ENCODE measurements at regions of chr17 and their contacts with region 1.

Region 1: DNA sequence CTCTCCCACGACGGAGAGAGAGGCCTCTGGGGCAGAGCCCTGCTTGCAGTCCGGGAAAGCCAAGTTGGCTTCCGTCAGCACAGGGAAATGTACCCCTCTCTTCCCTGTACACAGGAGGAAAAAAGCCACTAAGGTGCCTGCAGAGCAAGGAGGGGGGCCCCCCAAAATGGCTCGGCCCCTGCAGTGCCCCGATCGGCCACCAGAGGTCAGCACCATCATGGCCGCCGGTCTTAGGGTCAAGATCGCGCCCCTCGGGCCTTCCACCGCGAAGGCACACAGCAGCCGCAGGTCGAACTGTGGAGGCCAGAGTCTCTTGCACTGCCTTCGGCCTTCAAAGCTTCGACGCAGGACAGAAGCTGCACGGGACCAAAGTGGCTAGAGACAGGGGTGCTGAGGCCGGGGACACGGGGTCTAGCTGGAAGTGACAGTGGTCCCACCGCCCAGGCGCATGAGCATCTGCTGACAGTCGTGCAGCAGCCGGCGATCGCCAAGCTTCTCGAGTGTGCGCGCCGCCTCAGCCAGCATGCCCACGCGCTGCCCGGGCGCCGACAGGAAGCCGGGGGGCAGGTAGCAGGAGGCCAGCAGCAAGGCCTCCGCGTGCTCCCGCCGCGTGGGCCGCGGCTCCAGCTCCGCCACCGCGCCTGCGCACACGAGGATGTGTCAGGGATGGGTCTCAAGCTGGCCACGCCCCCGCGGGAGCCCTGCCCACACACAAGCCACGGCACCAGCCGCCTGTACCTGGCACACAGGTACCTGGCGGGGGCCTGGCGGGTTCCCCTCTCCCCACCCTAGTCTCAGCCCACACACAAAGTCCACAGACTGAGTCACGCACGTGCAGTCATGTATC is 24.4 kb downstream of the SREBF1 start:
- DNase-seq: peak; percentile 92
- H3K4me3 ChIP-seq: no peak overlapping the region
- H3K27ac ChIP-seq: peak overlapping the region in 7 of 8 donors; percentile 1 to 57 (median 26)
- H3K4me1 ChIP-seq: peaks cover 9 to 67% (median 20%) of the 10 kb centered on the region in 6 donors
- H3K27me3 ChIP-seq: no peaks in the 10 kb centered on the region
- CTCF ChIP-seq: peak; percentile 95 to 100 (median 99)
- POLR2A ChIP-seq: peak in 1 of 3 donors; percentile 20

Region 2: GRCh38 chr17:17859909-17860765 is 47.7 kb after region 1 on chr17:
- intact Hi-C with region 1: loop called (anchors 2 kb)
- DNase-seq: peak; percentile 92
- H3K4me3 ChIP-seq: no peak overlapping the region
- H3K27ac ChIP-seq: no peak overlapping the region
- H3K4me1 ChIP-seq: peaks cover 0 to 26% (median 7%) of the 10 kb centered on the region in 6 donors
- H3K27me3 ChIP-seq: no peaks in the 10 kb centered on the region
- CTCF ChIP-seq: peak; percentile 93 to 98 (median 97)
- POLR2A ChIP-seq: no peak

Region 3: DNA sequence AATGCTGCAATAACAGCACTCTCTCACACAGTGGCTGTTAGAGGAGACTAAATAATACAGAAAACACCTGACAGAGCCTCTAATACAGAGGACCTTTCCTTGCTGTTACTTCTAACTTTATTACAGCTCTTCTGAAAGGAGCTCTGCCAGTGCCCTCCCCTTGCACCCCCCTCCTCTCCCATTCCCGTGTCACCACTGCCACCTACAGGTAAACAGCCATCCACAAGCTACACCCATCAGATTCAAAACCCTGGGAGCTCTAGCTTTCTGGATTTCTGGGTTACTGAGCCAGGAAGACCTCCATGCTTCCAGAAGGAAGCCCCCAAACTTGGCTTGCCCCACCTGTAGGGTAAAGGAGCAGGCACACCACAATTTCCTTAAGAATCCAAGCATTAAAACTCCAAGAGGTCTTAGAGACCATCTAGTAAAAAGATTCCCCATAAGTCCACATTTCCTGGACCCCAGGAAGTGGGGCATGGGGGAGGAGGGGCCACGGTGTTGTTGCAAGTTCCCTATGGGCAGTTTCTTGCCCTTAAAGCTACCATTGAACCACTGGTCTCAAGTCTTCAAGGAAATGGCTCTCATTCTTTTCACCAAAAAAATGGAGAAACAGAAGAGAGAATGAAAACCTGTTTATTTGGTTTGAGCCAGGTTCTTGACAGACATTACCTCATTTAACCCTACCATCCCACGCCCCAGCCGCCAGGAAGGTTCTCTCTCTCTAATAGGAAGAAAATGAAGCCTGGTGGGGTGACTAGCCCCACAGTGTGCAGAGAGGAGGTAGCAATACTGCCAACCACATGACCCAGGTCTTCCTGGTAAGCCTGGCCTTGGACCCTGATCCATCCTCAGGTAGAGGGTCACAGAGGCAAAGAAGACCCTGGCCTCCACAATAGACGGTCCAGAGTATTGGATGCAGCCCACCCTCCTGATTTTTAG is 107.0 kb after region 1 on chr17:
- intact Hi-C with region 1: loop called (anchors 10 kb)
- DNase-seq: peak; percentile 82
- H3K4me3 ChIP-seq: no peak overlapping the region
- H3K27ac ChIP-seq: no peak overlapping the region
- H3K4me1 ChIP-seq: peaks cover 0 to 47% (median 18%) of the 10 kb centered on the region in 6 donors
- H3K27me3 ChIP-seq: no peaks in the 10 kb centered on the region
- CTCF ChIP-seq: peak; percentile 38 to 77 (median 69)
- POLR2A ChIP-seq: no peak